Left lung (tissue), 14 donors: ENCODE measurements at regions of chr18 and their contacts with region 1.

Region 1: DNA sequence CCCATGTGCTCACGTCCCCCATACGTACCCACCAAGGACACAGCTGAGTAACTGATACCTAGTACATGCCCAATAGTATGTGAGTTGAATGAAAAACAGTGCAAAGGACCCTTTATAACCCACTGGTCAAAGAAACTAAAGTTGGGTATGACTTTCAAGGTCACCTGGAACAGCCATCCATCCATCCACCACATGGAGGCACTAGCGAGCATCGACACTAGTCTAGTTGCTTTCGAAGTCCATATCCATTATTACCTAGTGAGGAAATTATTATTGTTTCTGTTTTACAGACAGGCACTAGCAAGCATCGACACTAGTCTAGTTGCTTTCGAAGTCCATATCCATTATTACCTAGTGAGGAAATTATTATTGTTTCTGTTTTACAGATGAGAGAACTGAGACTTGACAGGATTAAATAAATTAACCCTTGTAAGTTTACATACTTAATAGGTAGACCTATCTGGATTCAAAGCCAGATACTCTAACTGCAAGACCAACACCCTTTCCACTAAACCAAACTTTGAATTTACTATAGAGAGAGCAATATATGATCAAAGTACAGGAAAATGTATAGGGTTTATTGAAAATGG is 233.7 kb downstream of the METTL4 start:
- DNase-seq: no peak
- ATAC-seq: peak; percentile 62
- H3K4me3 ChIP-seq: no peak overlapping the region
- H3K27ac ChIP-seq: no peak overlapping the region
- H3K4me1 ChIP-seq: no peaks in the 10 kb centered on the region
- H3K27me3 ChIP-seq: no peaks in the 10 kb centered on the region
- CTCF ChIP-seq: peak; percentile 28 to 50

Region 2: DNA sequence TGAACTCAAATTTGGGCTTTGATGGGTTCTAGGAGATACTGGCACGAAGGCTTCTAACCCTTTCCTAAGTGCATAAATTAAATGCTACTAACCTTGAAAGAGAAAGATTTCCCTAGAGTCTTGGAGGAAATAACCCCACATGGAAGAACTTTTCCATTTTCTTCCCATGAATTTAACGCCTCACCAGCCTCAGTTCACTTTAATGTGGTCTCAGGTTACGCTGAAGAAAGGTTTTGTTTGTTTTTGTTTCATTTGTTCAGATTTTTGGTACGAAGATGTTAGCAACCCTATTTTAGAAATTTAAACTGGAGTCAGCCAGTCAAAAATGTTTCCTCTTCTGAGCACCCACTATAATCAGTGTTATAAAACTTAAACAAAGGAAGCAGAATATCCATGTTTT is 202.9 kb after region 1 on chr18:
- intact Hi-C with region 1: loop called in 1 of 2 experiments (anchors 5 kb)
- DNase-seq: no peak
- ATAC-seq: no peak
- H3K4me3 ChIP-seq: no peak overlapping the region
- H3K27ac ChIP-seq: no peak overlapping the region
- H3K4me1 ChIP-seq: no peaks in the 10 kb centered on the region
- H3K27me3 ChIP-seq: no peaks in the 10 kb centered on the region
- CTCF ChIP-seq: no peak